A673 (cell line): ENCODE measurements at regions of chr11 and their contacts with region 1.

Region 1: DNA sequence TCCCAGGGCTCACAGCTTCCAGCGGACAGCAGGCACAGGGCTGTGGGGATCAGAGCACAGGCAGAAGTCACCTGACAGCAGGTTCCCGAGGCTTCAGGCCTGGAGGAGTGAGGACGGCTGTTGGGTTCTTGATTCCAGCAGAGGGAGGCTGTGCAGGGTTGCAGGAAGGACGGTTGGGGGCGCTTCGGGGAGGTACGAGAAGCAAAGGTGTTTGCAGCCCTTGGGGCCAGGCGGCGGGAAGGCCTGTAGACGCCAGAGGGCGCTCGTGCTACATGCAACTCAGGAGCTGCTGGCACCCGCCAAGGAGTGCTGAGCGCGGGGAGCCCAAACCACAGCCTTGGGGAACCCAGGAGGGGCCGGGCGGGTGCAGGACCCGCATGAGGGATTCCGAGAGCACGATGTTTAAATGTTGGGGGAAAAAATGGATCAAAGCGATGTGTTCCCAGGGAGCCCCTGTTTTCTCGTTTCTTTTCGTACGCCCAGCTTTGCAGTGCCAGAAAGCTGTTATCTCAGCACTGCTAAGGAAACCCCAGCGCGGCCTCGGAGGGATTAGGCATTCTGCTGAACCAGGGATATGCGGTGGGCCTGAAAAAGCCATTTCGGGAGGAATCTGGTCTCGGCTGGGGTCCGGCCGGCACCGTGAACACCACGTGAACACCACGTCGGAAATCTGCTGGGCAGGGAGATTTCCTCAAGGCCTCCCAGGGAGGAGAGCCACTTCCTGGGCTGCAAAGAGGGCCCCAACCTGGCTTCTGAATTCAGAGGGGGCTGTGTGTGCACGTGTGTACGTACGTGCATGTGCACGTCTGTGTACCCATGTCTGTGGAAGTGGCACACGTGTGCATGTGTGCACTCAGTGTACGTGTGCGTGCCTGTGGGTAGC is 88.1 kb downstream of the KCNQ1 start:
- DNase-seq: peak; percentile 89
- H3K4me3 ChIP-seq: no peak overlapping the region
- H3K27ac ChIP-seq: no peak overlapping the region
- H3K4me1 ChIP-seq: peaks cover 5% of the 10 kb centered on the region
- H3K27me3 ChIP-seq: no peaks in the 10 kb centered on the region
- CTCF ChIP-seq: peak; percentile 97

Region 2: DNA sequence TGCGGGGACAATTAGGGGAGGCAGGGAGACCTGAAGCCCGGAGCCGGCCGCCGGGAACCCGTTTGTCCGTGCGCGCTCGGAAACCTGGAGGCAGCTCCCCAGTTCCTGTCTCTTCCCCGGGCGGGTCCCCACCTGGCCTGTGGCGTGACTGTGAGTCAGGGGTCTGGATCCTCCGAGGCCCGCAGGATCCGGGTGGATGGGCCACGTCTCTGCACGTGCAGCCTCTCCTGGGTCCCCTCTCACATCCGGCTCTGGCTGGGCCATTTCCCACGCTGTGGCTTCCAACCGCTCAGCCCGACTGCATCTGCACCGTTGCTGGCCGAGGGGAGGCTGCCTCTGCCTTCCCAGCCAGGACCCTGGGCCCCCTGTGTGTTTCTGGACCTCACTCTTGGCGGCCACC is 520.5 kb before region 1 on chr11:
- CTCF ChIA-PET with region 1: no interaction called
- POLR2A ChIA-PET with region 1: no interaction called
- intact Hi-C with region 1: no loop called
- DNase-seq: no peak
- H3K4me3 ChIP-seq: no peak overlapping the region
- H3K27ac ChIP-seq: no peak overlapping the region
- H3K4me1 ChIP-seq: no peaks in the 10 kb centered on the region
- H3K27me3 ChIP-seq: no peaks in the 10 kb centered on the region
- CTCF ChIP-seq: no peak

Region 3: DNA sequence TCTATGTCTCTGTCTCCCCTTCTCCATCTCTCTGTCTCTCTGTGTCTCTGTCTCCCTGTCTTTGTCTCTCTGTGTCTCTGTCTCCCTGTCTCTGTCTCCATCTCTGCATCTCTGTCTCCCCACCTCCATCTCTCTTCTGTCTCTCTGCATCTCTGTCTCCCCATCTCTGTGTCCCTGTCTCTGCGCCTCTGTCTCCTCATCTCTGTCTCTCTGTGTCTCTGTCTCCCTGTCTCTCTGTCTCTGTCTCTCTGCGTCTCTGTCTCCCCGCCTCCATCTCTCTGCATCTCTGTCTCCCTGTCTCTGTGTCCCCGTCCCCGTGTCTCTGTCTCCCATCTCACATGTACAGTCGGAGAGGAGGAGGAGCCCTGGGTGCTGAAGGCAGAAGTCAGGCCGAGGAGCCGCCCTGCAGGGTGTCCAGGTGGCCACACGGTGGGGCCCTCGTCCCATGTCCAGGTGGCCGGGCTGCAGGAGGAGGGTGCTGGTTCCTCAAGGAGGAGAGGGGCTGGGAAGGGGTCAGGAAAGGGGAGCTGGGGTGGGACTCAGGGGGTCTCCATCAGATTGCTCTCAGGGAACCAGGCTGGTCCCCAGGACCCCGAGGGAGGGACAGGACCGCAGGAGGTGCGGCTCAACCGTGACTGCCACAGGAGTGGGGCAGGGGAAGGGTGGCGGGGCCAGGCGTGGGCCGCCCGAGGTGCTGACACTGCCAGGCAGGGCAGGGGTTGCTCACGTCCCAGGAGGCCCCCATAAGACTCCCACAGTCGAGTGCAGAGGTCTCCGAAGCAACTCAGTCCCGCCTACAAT is 335.8 kb before region 1 on chr11:
- CTCF ChIA-PET with region 1: no interaction called
- POLR2A ChIA-PET with region 1: no interaction called
- intact Hi-C with region 1: loop called (anchors 10 kb)
- DNase-seq: peak; percentile 58
- H3K4me3 ChIP-seq: no peak overlapping the region
- H3K27ac ChIP-seq: no peak overlapping the region
- H3K4me1 ChIP-seq: no peaks in the 10 kb centered on the region
- H3K27me3 ChIP-seq: no peaks in the 10 kb centered on the region
- CTCF ChIP-seq: peak; percentile 68

Region 4: GRCh38 chr11:2305140-2305840 is 227.7 kb before region 1 on chr11:
- CTCF ChIA-PET with region 1: no interaction called
- POLR2A ChIA-PET with region 1: no interaction called
- intact Hi-C with region 1: loop called (anchors 1 kb)
- DNase-seq: peak; percentile 63
- H3K4me3 ChIP-seq: no peak overlapping the region
- H3K27ac ChIP-seq: no peak overlapping the region
- H3K4me1 ChIP-seq: peaks cover 6% of the 10 kb centered on the region
- H3K27me3 ChIP-seq: no peaks in the 10 kb centered on the region
- CTCF ChIP-seq: peak; percentile 83

Region 5: GRCh38 chr11:2428322-2428795 is 104.6 kb before region 1 on chr11:
- CTCF ChIA-PET with region 1: interaction called, 3 read pairs
- POLR2A ChIA-PET with region 1: no interaction called
- intact Hi-C with region 1: loop called (anchors 1 kb)
- DNase-seq: peak; percentile 34
- H3K4me3 ChIP-seq: no peak overlapping the region
- H3K27ac ChIP-seq: no peak overlapping the region
- H3K4me1 ChIP-seq: no peaks in the 10 kb centered on the region
- H3K27me3 ChIP-seq: no peaks in the 10 kb centered on the region
- CTCF ChIP-seq: peak; percentile 71

Region 6: GRCh38 chr11:2885676-2886081 is 352.7 kb after region 1 on chr11 and contains the start of gene CDKN1C:
- CTCF ChIA-PET with region 1: interaction called, 52 read pairs
- POLR2A ChIA-PET with region 1: no interaction called
- intact Hi-C with region 1: loop called (anchors 1 kb)
- DNase-seq: peak; percentile 86
- H3K4me3 ChIP-seq: peak within 1 kb of the TSS; percentile 44
- H3K27ac ChIP-seq: no peak within 1 kb of the TSS
- H3K4me1 ChIP-seq: peaks cover 3% of the 10 kb centered on the region
- H3K27me3 ChIP-seq: peaks cover 12% of the 10 kb centered on the region
- CTCF ChIP-seq: no peak
- total RNA-seq, gene CDKN1C: 2.9 and 3.5 TPM in 2 replicates

Region 7: GRCh38 chr11:2892215-2893020 is 359.5 kb after region 1 on chr11:
- CTCF ChIA-PET with region 1: interaction called, 52 read pairs
- POLR2A ChIA-PET with region 1: no interaction called
- intact Hi-C with region 1: loop called (anchors 1 kb)
- DNase-seq: peak; percentile 71
- H3K4me3 ChIP-seq: peak overlapping the region; percentile 32
- H3K27ac ChIP-seq: peak overlapping the region; percentile 55
- H3K4me1 ChIP-seq: peaks cover 19% of the 10 kb centered on the region
- H3K27me3 ChIP-seq: no peaks in the 10 kb centered on the region
- CTCF ChIP-seq: peak; percentile 92